Caco-2 (cell line): ENCODE measurements at regions of chr7 and their contacts with region 1.

Region 1: GRCh38 chr7:74567318-74567668 is 90.2 kb upstream of the GTF2I start:
- DNase-seq: no peak
- H3K4me3 ChIP-seq: no peak overlapping the region
- H3K4me3 Mint-ChIP-seq: no peak overlapping the region
- H3K27ac Mint-ChIP-seq: peak overlapping the region; percentile 67
- H3K4me1 ChIP-seq: peaks cover 16% of the 10 kb centered on the region
- H3K4me1 Mint-ChIP-seq: peaks cover 22% of the 10 kb centered on the region
- H3K27me3 ChIP-seq: no peaks in the 10 kb centered on the region
- H3K27me3 Mint-ChIP-seq: no peaks in the 10 kb centered on the region
- CTCF ChIP-seq: no peak

Region 2: DNA sequence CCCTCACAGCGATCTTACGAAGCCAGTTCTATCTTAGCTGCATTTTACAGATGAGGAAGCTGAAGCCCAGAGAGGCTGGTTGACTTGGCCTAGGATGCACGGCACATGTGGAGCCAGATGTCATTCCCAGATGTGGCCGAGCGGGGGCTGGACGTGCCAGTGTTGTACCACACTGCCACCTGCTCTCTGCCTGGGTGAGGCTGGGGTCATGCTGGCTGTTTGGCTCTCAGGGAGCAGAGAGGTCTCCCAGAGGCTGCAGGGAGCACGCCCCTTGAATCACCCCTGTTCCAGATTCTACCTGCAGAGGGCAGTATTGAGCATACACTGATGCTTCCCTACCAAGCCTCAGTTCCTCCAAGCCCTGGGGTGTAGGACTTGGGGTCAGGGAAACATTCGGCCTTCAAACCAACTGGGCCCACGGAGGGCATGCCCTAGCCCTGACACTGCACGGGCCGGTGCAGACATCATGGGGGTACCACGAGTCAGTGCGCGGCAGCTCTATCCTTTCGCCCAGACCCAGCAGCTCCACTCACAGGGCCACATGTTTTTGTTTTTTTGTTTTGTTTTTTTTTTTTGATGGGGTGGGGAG is 117.4 kb before region 1 on chr7:
- CTCF ChIA-PET with region 1: interaction called, 5 read pairs
- POLR2A ChIA-PET with region 1: no interaction called
- intact Hi-C with region 1: loop called (anchors 1 kb)
- DNase-seq: peak; percentile 62 to 72
- H3K4me3 ChIP-seq: no peak overlapping the region
- H3K4me3 Mint-ChIP-seq: no peak overlapping the region
- H3K27ac Mint-ChIP-seq: no peak overlapping the region
- H3K4me1 ChIP-seq: peaks cover 8% of the 10 kb centered on the region
- H3K4me1 Mint-ChIP-seq: peaks cover 1% of the 10 kb centered on the region
- H3K27me3 ChIP-seq: no peaks in the 10 kb centered on the region
- H3K27me3 Mint-ChIP-seq: no peaks in the 10 kb centered on the region
- CTCF ChIP-seq: peak; percentile 72 to 92